K562 (cell line): ENCODE measurements at regions of chr12 and their contacts with region 1.

Region 1: GRCh38 chr12:54294152-54294952 is 6.5 kb downstream of the NFE2 start:
- DNase-seq: peak; percentile 80 to 93 (median 83)
- ATAC-seq: peak; percentile 34
- H3K4me3 ChIP-seq: peak overlapping the region; percentile 53
- H3K27ac ChIP-seq: peak overlapping the region; percentile 84
- H3K4me1 ChIP-seq: peaks cover 34 to 38% of the 10 kb centered on the region in 2 experiments; a peak in 4 of 5 replicates
- H3K27me3 ChIP-seq: no peaks in the 10 kb centered on the region; a peak in 1 of 5 replicates
- CTCF ChIP-seq: peak; percentile 92 to 96 (median 93)
- EP300 ChIP-seq: peak; percentile 80
- POLR2A ChIP-seq: no peak
- RAD21 ChIP-seq: peak; percentile 92 to 94

Region 2: DNA sequence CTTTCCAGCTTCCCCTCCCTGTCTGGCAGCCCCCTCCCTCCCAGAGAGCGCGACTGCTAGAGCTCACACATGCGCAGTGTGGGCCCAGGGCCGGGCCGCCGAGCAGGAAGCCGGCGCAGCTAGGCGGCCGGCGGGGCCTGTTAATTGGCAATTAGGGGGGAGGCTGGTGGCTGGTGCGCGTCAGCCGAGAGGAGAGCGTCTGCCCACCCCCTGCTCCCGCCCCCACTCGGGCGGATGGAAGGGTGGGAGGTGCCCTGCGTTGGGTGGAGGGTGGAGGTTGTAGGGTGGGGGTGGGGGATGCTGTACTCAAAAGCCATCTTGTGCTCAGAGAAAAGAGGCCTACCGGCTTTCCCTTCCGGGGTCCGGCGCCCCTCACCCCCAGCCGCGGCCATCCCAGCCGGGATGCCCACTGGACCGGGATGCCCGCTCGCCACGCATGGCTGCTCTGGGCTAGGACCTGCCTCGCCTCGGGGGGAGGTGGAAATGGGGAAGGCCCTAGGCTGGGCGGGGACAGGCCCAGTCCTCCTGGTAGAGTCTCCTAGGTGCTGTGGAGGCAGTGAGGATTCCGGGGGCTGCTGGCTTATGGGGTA is 276.4 kb before region 1 on chr12:
- CTCF ChIA-PET with region 1: no interaction called
- POLR2A ChIA-PET with region 1: no interaction called
- in situ Hi-C with region 1: no loop called
- intact Hi-C with region 1: loop called (anchors 10 kb)
- DNase-seq: peak; percentile 95 to 98 (median 98)
- ATAC-seq: peak; percentile 88
- H3K4me3 ChIP-seq: peak overlapping the region; percentile 60
- H3K27ac ChIP-seq: peak overlapping the region; percentile 86
- H3K4me1 ChIP-seq: peaks cover 10 to 47% of the 10 kb centered on the region in 2 experiments
- H3K27me3 ChIP-seq: no peaks in the 10 kb centered on the region
- CTCF ChIP-seq: no peak
- EP300 ChIP-seq: no peak
- POLR2A ChIP-seq: peak; percentile 78
- RAD21 ChIP-seq: no peak

Region 3: DNA sequence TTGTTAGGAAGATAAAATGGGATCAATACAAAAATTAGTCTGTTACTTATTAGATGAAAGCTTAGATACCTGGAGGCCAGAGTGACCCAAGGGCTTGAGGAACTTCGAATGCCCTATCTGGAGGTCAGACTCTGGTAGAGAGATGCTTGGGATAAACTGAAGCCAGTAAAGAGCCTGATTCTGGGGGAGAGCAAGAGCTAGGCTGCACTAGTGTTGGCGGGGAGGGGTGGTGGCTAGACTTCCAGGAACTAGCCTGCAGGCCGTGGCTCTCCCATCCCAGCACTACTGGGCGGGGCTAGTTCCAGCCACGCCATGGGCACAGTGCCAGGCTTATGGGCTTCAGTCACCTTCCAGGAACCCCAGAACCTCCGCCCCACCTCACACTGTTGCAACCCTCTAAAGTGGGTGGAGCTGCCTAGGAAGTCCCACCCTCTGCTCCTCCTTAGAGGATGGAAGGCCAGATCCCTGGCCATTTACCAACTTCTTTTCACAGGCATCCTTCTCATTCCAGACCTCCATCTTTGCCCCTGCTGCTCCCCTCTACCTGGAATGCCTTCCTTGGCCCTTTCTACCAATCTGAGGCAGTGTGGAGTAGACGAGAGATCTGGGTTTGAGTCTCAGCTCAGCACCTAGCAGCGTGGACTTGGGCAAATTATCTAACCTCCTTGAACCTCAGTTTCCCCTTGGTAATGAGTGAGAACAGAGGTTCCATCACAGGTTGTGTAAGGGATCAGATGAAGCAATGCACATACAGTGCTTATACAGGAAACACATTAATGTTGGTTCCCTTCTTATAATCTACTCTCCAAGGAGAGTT is 12.8 kb after region 1 on chr12:
- CTCF ChIA-PET with region 1: no interaction called
- POLR2A ChIA-PET with region 1: interaction called, 17 read pairs
- in situ Hi-C with region 1: no loop called
- intact Hi-C with region 1: loop called (anchors 1 kb)
- DNase-seq: peak; percentile 90 to 100 (median 92)
- ATAC-seq: peak; percentile 83
- H3K4me3 ChIP-seq: no peak overlapping the region
- H3K27ac ChIP-seq: peak overlapping the region; percentile 54
- H3K4me1 ChIP-seq: peaks cover 43 to 49% of the 10 kb centered on the region in 2 experiments
- H3K27me3 ChIP-seq: no peaks in the 10 kb centered on the region
- CTCF ChIP-seq: no peak
- EP300 ChIP-seq: peak; percentile 78
- POLR2A ChIP-seq: peak; percentile 64
- RAD21 ChIP-seq: peak in 1 of 2 experiments; percentile 12; a peak in 1 of 4 replicates